Activated T-helper 2 cell treated with anti-CD3 and anti-CD28 coated beads, Interferon-gamma antibody, Interleukin-2, Interleukin-4, amounts not matched to agents 10 μg/mL and 5 μg/mL and 100 μg/mL, durations not matched to agents 14 hours and 24 hours and 36 hours (primary cell): ENCODE measurements at regions of chr12 and their contacts with region 1.

Region 1: DNA sequence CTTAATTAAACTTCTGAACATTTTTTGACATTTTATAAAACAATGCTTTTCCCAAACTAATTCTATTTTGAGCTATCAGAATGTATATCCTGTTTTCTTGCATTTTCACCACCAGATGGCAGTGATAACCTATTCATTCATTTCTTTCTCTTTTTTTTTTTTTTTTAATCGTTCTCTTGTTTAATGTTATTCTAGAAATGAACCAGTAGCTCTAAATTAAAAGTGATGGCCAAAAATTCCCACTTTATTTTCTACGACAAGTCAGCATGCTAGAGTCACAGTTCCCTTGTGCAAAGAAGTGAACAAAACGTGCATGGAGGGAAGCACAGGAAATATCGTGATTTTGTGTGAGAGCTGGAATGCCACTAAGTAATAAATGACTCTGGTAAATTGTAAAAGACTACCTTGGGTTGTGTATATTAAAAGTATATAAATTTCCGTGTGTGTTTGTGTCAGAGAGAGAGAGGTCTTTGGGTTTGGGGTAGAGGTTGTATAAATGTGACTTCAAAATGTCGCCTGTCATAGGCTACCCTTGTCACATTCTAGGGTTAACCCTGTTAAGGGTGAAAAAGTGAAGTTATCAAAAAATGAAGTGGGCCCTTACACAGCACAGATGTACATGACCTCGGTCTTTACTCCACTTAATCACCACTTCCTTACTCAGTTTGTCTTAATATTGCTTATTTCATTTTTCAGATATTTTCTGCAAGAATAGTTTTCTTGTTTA is 40.4 kb upstream of the LDHB start:
- DNase-seq: no peak
- H3K4me3 Mint-ChIP-seq: no peak overlapping the region
- H3K27ac Mint-ChIP-seq: no peak overlapping the region
- H3K4me1 Mint-ChIP-seq: peaks cover 6% of the 10 kb centered on the region
- H3K27me3 Mint-ChIP-seq: peaks cover 5% of the 10 kb centered on the region

Region 2: GRCh38 chr12:21677622-21678277 is 20.3 kb before region 1 on chr12:
- intact Hi-C with region 1: no loop called
- DNase-seq: no peak
- H3K4me3 Mint-ChIP-seq: no peak overlapping the region
- H3K27ac Mint-ChIP-seq: no peak overlapping the region
- H3K4me1 Mint-ChIP-seq: peaks cover 31% of the 10 kb centered on the region
- H3K27me3 Mint-ChIP-seq: peaks cover 7% of the 10 kb centered on the region

Region 3: GRCh38 chr12:22018860-22019259 is 320.8 kb after region 1 on chr12:
- intact Hi-C with region 1: loop called (anchors 1 kb)
- DNase-seq: no peak
- H3K4me3 Mint-ChIP-seq: no peak overlapping the region
- H3K27ac Mint-ChIP-seq: no peak overlapping the region
- H3K4me1 Mint-ChIP-seq: no peaks in the 10 kb centered on the region
- H3K27me3 Mint-ChIP-seq: no peaks in the 10 kb centered on the region